Activated CD4-positive, alpha-beta memory T cell treated with anti-CD3 and anti-CD28 coated beads for 36 hours (primary cell): ENCODE measurements at regions of chr3 and their contacts with region 1.

Region 1: GRCh38 chr3:196165850-196166249 is 45.4 kb downstream of the ZDHHC19 start:
- DNase-seq: no peak
- H3K4me3 Mint-ChIP-seq: no peak overlapping the region
- H3K27ac Mint-ChIP-seq: no peak overlapping the region
- H3K4me1 Mint-ChIP-seq: peaks cover 11% of the 10 kb centered on the region
- H3K27me3 Mint-ChIP-seq: no peaks in the 10 kb centered on the region

Region 2: DNA sequence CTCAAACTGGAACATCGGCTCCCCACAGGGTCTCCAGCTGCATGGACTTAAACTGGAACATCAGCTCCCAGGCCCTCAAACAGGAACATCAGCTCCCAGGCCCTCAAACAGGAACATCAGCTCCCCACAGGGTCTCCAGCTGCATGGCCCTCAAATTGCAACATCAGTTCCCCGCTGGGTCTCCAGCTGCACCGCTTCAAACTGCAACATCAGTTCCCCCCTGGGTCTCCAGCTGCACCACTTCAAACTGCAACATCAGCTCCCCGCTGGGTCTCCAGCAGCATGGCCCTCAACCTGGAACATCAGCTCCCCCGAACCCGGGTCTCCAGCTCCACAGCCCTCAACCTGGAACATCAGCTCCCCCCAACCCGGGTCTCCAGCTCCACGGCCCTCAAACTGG is 166.0 kb before region 1 on chr3:
- CTCF ChIA-PET with region 1: no interaction called
- POLR2A ChIA-PET with region 1: no interaction called
- intact Hi-C with region 1: no loop called
- DNase-seq: no peak
- H3K4me3 Mint-ChIP-seq: no peak overlapping the region
- H3K27ac Mint-ChIP-seq: no peak overlapping the region
- H3K4me1 Mint-ChIP-seq: no peaks in the 10 kb centered on the region
- H3K27me3 Mint-ChIP-seq: peaks cover 21% of the 10 kb centered on the region

Region 3: GRCh38 chr3:196111939-196112386 is 53.9 kb before region 1 on chr3:
- CTCF ChIA-PET with region 1: no interaction called
- POLR2A ChIA-PET with region 1: no interaction called
- intact Hi-C with region 1: loop called (anchors 2 kb)
- DNase-seq: peak; percentile 58
- H3K4me3 Mint-ChIP-seq: peak overlapping the region; percentile 33
- H3K27ac Mint-ChIP-seq: peak overlapping the region; percentile 84
- H3K4me1 Mint-ChIP-seq: peaks cover 19% of the 10 kb centered on the region
- H3K27me3 Mint-ChIP-seq: no peaks in the 10 kb centered on the region